Breast epithelium (tissue), 4 donors: ENCODE measurements at regions of chr5 and their contacts with region 1.

Region 1: GRCh38 chr5:15044521-15044920 is 172.9 kb upstream of the ANKH start:
- DNase-seq: no peak
- H3K4me3 ChIP-seq: no peak overlapping the region
- H3K27ac ChIP-seq: no peak overlapping the region
- H3K4me1 ChIP-seq: no peaks in the 10 kb centered on the region
- H3K27me3 ChIP-seq: no peaks in the 10 kb centered on the region
- CTCF ChIP-seq: no peak
- POLR2A ChIP-seq: no peak

Region 2: DNA sequence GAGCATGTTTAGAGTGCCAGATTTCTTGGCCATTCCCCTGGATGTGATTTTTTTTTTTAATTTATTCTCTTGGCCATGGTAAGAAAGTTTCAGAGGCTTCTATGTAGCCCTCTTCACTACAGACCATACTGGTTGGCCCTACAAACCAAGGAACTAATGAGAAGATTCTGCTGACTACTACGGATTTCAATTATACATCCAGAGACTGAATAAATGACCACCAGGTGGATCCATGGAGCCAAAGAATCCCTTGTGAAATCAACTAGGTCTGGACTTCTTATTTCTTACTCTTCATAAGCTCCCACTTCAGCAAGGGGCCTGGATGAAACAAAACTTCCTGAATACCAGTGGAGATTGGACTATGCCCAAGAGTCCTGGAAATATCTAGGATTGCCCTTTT is 1393.5 kb after region 1 on chr5:
- intact Hi-C with region 1: loop called (anchors 5 kb)
- DNase-seq: no peak
- H3K4me3 ChIP-seq: no peak overlapping the region
- H3K27ac ChIP-seq: no peak overlapping the region
- H3K4me1 ChIP-seq: no peaks in the 10 kb centered on the region
- H3K27me3 ChIP-seq: no peaks in the 10 kb centered on the region
- CTCF ChIP-seq: no peak
- POLR2A ChIP-seq: no peak